ENCODE measurements at regions of chr14 and their contacts with region 1.

Region 1: GRCh38 chr14:49892636-49893308 is at the start of gene ARF6:
- DNase-seq: peak; percentile 98 to 99
- ATAC-seq: peak; percentile 89 to 90
- H3K4me3 ChIP-seq: peak within 1 kb of the TSS; percentile 66 to 93 (median 89)
- H3K27ac ChIP-seq: peak within 1 kb of the TSS; percentile 96 to 100 (median 98)
- H3K4me1 ChIP-seq: peaks cover 39 to 46% of the 10 kb centered on the region in 2 donors
- H3K27me3 ChIP-seq: no peaks in the 10 kb centered on the region
- CTCF ChIP-seq: peak in 3 of 5 experiments; percentile 11 to 22 (median 20)
- POLR2A ChIP-seq: peak; percentile 98 to 99
- total RNA-seq, gene ARF6: 20.7 to 40.0 (median 30.8) TPM

Region 2: GRCh38 chr14:49852301-49853157 is 40.2 kb before region 1 on chr14 and contains the start of gene NEMF:
- in situ Hi-C with region 1: no loop called
- intact Hi-C with region 1: loop called (anchors 1 kb)
- DNase-seq: peak; percentile 71 to 83
- ATAC-seq: peak; percentile 81
- H3K4me3 ChIP-seq: peak within 1 kb of the TSS; percentile 78 to 95 (median 86)
- H3K27ac ChIP-seq: peak within 1 kb of the TSS; percentile 92 to 98 (median 96)
- H3K4me1 ChIP-seq: peaks cover 37 to 39% of the 10 kb centered on the region in 2 donors
- H3K27me3 ChIP-seq: no peaks in the 10 kb centered on the region
- CTCF ChIP-seq: peak; percentile 76 to 92 (median 78)
- POLR2A ChIP-seq: peak; percentile 79 to 82
- total RNA-seq, gene NEMF: 56.5 to 71.1 (median 65.2) TPM

Region 3: GRCh38 chr14:50109342-50109741 is 216.6 kb after region 1 on chr14:
- in situ Hi-C with region 1: no loop called
- intact Hi-C with region 1: loop called (anchors 1 kb)
- DNase-seq: no peak
- ATAC-seq: no peak
- H3K4me3 ChIP-seq: no peak overlapping the region
- H3K27ac ChIP-seq: no peak overlapping the region
- H3K4me1 ChIP-seq: peaks cover 0 to 6% of the 10 kb centered on the region in 2 donors
- H3K27me3 ChIP-seq: no peaks in the 10 kb centered on the region
- CTCF ChIP-seq: no peak
- POLR2A ChIP-seq: no peak